Esophagus squamous epithelium (tissue), 5 donors: ENCODE measurements at regions of chr20 and their contacts with region 1.

Region 1: GRCh38 chr20:45765980-45766379 is 25.7 kb downstream of the WFDC3 start:
- DNase-seq: no peak
- H3K4me3 ChIP-seq: no peak overlapping the region
- H3K27ac ChIP-seq: no peak overlapping the region
- H3K4me1 ChIP-seq: peaks cover 0 to 4% (median 0%) of the 10 kb centered on the region in 3 donors
- H3K27me3 ChIP-seq: no peaks in the 10 kb centered on the region
- CTCF ChIP-seq: no peak
- POLR2A ChIP-seq: no peak

Region 2: GRCh38 chr20:45318948-45319347 is 447.0 kb before region 1 on chr20:
- intact Hi-C with region 1: loop called (anchors 5 kb)
- DNase-seq: no peak
- H3K4me3 ChIP-seq: no peak overlapping the region
- H3K27ac ChIP-seq: no peak overlapping the region
- H3K4me1 ChIP-seq: peaks cover 0 to 29% (median 0%) of the 10 kb centered on the region in 3 donors
- H3K27me3 ChIP-seq: peaks cover 3 to 43% (median 7%) of the 10 kb centered on the region in 4 donors
- CTCF ChIP-seq: no peak
- POLR2A ChIP-seq: no peak